RWPE1 (cell line): ENCODE measurements at regions of chr10 and their contacts with region 1.

Region 1: DNA sequence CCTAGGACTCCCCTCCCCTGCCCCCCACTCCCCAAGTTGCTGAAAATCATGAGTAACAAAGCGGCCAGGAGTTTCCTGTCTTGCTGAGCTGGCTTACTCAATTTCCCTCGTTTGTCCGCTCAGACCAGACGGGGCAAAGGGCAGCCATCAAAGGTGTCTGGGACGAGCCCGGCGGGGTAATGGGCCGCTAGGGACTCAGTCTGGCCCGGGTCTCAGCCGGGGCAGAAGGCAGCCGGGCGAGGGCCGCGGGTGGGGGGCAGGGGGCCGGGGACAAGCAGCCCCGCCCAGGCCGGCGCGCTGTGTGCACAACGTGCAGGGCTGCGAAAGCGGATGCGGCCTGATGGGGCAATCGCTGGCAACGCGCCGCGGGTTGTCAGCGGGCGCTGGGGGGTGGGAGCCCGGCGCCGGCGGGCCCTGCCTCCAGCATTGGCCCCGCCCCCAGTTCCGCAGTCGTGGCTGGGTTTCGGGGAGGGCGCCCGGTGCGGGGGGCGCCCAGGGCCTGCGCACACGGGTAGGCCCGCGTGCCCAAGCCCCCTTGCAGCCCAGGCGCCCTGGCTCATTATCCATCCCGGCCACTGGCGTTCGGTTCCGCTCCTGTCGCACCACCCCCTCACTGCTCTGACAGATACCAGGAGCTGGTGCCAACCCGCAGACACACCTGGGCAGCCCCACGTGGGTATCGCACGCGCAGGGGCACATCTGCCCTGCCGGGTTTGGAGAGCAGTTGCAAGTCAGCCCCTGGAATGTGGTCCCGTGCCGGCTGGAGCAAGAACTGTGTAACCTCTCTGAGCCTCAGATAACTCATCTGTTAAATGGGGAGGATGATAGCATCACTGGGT is 35.1 kb downstream of the DNAJB12 start:
- DNase-seq: peak; percentile 94
- H3K27ac ChIP-seq: peak overlapping the region; percentile 100
- CTCF ChIP-seq: no peak

Region 2: GRCh38 chr10:72278668-72279393 is 40.8 kb before region 1 on chr10:
- CTCF ChIA-PET with region 1: interaction called, 5 read pairs
- POLR2A ChIA-PET with region 1: interaction called, 86 read pairs
- DNase-seq: no peak
- H3K27ac ChIP-seq: peak overlapping the region; percentile 100
- CTCF ChIP-seq: no peak

Region 3: DNA sequence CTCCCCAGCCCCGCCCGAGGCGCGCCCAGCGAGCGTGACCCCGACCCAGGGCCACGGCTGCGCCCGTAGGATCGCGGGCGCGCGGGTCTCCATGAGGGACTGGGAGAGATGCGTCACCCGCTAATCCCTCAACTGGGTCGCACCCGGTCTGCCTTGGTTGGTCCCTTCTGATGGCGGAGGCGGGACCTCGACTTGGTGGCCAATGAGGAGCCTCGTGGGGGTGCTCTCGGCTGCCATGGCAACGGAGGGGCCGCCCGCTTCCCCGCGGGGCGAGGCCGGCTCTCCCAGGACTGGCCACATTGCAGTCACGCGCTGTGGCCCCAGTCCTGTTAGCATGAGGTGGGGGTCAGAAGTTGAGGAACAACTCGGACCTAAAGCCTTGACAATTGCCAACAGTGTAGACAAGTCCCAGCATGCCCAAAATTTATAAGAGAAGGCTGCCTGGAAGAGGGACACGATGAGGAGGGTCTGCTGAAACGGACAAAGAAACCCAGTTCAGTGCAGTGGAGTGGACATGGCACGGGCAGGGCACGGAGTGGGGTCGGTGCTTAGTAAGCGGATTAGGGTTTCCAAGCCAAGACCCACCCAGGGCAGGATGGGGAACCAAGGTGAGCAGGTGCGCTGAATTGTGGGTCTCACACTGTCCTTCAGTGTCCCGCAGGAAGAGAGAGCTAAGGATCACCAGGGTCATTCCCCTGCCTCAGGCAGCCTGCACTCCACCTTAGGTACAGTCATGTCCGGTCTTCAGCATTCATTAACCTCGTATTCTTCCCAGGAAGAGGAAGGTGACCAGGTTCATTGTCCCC is 21.5 kb before region 1 on chr10:
- CTCF ChIA-PET with region 1: no interaction called
- POLR2A ChIA-PET with region 1: interaction called, 18 read pairs
- DNase-seq: peak; percentile 96
- H3K27ac ChIP-seq: peak overlapping the region; percentile 95
- CTCF ChIP-seq: no peak

Region 4: DNA sequence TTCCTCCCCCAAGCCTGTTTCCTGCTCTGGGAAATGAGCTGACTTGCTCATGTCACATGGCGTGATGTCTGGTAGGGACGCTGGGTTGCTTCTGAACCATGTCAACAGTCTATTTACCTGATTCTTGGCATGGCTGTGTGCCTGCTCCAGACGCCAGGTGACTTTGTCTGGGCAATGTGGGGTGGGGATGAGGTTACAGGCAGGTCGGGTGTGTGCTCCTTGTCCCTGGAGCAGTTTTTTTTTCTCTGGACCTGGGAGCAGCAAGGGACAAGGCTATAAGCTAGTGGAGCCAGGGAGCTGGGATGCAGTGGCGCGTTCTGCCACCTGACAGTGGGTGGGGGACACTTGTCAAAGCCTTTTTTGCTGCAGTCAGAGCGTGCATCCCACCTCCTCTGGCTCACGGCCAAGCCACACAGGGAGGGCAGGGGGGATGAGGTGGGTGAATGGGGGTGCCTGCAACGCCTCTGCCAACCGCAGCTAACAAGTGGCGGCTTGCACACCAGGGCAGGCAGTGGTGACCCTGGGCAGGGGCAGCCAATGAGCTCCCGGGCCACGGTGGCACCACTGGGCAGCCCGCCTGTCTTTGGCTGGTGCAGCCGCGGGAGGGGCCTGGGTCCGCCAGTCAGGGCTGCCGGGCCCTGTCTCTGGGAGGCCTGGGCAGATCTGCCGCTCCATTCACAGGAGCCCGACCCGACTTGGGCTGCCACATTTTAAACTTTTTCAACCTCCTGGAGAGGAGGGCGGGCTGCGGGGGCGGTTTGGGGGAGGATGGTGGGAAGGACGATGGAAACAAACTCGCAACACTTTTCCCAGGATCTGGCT is 12.2 kb after region 1 on chr10:
- CTCF ChIA-PET with region 1: interaction called, 8 read pairs
- POLR2A ChIA-PET with region 1: interaction called, 33 read pairs
- DNase-seq: peak; percentile 97
- H3K27ac ChIP-seq: peak overlapping the region; percentile 100
- CTCF ChIP-seq: no peak